CD14-positive monocyte (primary cell): ENCODE measurements at regions of chr11 and their contacts with region 1.

Region 1: GRCh38 chr11:33065445-33066178 is 26.2 kb downstream of the TCP11L1 start:
- DNase-seq: peak; percentile 48 to 69 (median 58)
- H3K4me3 ChIP-seq: no peak overlapping the region
- H3K4me3 Mint-ChIP-seq: no peak overlapping the region
- H3K27ac ChIP-seq: no peak overlapping the region
- H3K27ac Mint-ChIP-seq: peak overlapping the region in 4 of 7 donors; percentile 43 to 91 (median 71)
- H3K4me1 ChIP-seq: peaks cover 32 to 34% of the 10 kb centered on the region in 2 donors
- H3K4me1 Mint-ChIP-seq: peaks cover 35% of the 10 kb centered on the region
- H3K27me3 ChIP-seq: no peaks in the 10 kb centered on the region
- H3K27me3 Mint-ChIP-seq: peaks cover 0 to 2% (median 1%) of the 10 kb centered on the region in 3 donors
- CTCF ChIP-seq: peak; percentile 89

Region 2: GRCh38 chr11:32960553-32961164 is 105.0 kb before region 1 on chr11:
- intact Hi-C with region 1: loop called (anchors 1 to 2 kb)
- DNase-seq: peak; percentile 20 to 58 (median 40)
- H3K4me3 ChIP-seq: no peak overlapping the region
- H3K4me3 Mint-ChIP-seq: no peak overlapping the region
- H3K27ac ChIP-seq: no peak overlapping the region
- H3K27ac Mint-ChIP-seq: no peak overlapping the region
- H3K4me1 ChIP-seq: no peaks in the 10 kb centered on the region
- H3K4me1 Mint-ChIP-seq: no peaks in the 10 kb centered on the region
- H3K27me3 ChIP-seq: no peaks in the 10 kb centered on the region
- H3K27me3 Mint-ChIP-seq: no peaks in the 10 kb centered on the region
- CTCF ChIP-seq: peak; percentile 83

Region 3: GRCh38 chr11:33015621-33016551 is 49.7 kb before region 1 on chr11 and contains the start of gene DEPDC7:
- intact Hi-C with region 1: loop called in 1 of 2 experiments (anchors 5 kb)
- DNase-seq: peak; percentile 78 to 86 (median 79)
- H3K4me3 ChIP-seq: peak within 1 kb of the TSS; percentile 47 to 78 (median 57)
- H3K4me3 Mint-ChIP-seq: peak within 1 kb of the TSS; percentile 87 to 92
- H3K27ac ChIP-seq: no peak within 1 kb of the TSS
- H3K27ac Mint-ChIP-seq: peak within 1 kb of the TSS in 2 of 7 donors; percentile 30 to 61
- H3K4me1 ChIP-seq: peaks cover 24 to 42% of the 10 kb centered on the region in 2 donors
- H3K4me1 Mint-ChIP-seq: peaks cover 29% of the 10 kb centered on the region
- H3K27me3 ChIP-seq: peaks cover 3 to 13% of the 10 kb centered on the region in 2 donors
- H3K27me3 Mint-ChIP-seq: peaks cover 5 to 13% (median 13%) of the 10 kb centered on the region in 3 donors
- CTCF ChIP-seq: no peak
- polyA plus RNA-seq, gene DEPDC7: 0.33 to 0.55 (median 0.48) TPM

Region 4: GRCh38 chr11:33103836-33104235 is 38.2 kb after region 1 on chr11:
- intact Hi-C with region 1: no loop called
- DNase-seq: no peak
- H3K4me3 ChIP-seq: no peak overlapping the region
- H3K4me3 Mint-ChIP-seq: no peak overlapping the region
- H3K27ac ChIP-seq: no peak overlapping the region
- H3K27ac Mint-ChIP-seq: no peak overlapping the region
- H3K4me1 ChIP-seq: no peaks in the 10 kb centered on the region
- H3K4me1 Mint-ChIP-seq: no peaks in the 10 kb centered on the region
- H3K27me3 ChIP-seq: no peaks in the 10 kb centered on the region
- H3K27me3 Mint-ChIP-seq: no peaks in the 10 kb centered on the region
- CTCF ChIP-seq: no peak